Activated CD4-positive, alpha-beta T cell treated with anti-CD3 and anti-CD28 coated beads for 36 hours (primary cell): ENCODE measurements at regions of chr5 and their contacts with region 1.

Region 1: GRCh38 chr5:179858586-179859427 is at the start of gene MRNIP:
- DNase-seq: peak; percentile 95
- ATAC-seq: peak; percentile 98
- H3K4me3 Mint-ChIP-seq: peak within 1 kb of the TSS; percentile 84
- H3K27ac Mint-ChIP-seq: peak within 1 kb of the TSS; percentile 85
- H3K4me1 Mint-ChIP-seq: peaks cover 6% of the 10 kb centered on the region
- H3K27me3 Mint-ChIP-seq: no peaks in the 10 kb centered on the region
- total RNA-seq, gene MRNIP: 19.4 to 19.7 TPM

Region 2: DNA sequence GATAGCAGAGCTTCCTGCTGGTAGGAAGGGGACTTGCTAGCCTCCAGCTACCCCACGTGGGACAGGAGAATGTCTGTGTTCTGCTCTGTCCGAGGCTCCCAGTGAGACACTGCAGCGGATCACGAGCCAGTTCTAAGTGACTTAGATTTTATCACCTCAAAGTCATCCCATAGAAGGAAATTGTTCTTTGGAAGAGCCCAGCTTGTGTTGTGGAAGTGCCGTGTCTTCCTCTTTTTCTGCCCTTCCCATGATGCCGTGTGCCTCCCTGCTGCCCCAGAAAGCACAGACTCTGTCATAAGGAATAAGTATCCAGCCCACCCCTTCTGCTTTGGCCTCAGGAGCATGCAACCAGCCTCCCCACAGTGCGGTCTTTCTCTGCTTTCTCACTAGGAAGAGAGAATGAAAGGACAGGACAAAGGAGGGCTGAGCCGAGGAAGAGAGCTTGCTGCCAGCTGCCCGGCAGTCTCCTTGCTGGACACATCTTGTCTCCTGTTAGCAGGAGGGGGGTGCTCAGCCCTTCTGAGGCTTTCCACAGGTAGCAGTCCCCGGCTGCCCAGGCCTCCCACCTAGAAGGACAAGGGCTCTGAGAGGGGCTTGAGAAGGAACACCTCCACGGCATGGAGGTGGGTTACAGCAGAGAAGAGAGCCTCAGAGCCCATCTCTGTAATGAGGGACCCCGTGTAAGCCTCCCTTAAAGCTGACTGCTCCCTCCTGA is 272.7 kb before region 1 on chr5:
- CTCF ChIA-PET with region 1: no interaction called
- POLR2A ChIA-PET with region 1: no interaction called
- intact Hi-C with region 1: no loop called
- DNase-seq: no peak
- ATAC-seq: no peak
- H3K4me3 Mint-ChIP-seq: no peak overlapping the region
- H3K27ac Mint-ChIP-seq: no peak overlapping the region
- H3K4me1 Mint-ChIP-seq: no peaks in the 10 kb centered on the region
- H3K27me3 Mint-ChIP-seq: no peaks in the 10 kb centered on the region

Region 3: GRCh38 chr5:179720222-179720621 is 138.6 kb before region 1 on chr5:
- CTCF ChIA-PET with region 1: no interaction called
- POLR2A ChIA-PET with region 1: no interaction called
- intact Hi-C with region 1: no loop called
- DNase-seq: no peak
- ATAC-seq: no peak
- H3K4me3 Mint-ChIP-seq: no peak overlapping the region
- H3K27ac Mint-ChIP-seq: no peak overlapping the region
- H3K4me1 Mint-ChIP-seq: peaks cover 4% of the 10 kb centered on the region
- H3K27me3 Mint-ChIP-seq: no peaks in the 10 kb centered on the region

Region 4: GRCh38 chr5:179821581-179822432 is 37.0 kb before region 1 on chr5:
- CTCF ChIA-PET with region 1: no interaction called
- POLR2A ChIA-PET with region 1: no interaction called
- intact Hi-C with region 1: loop called (anchors 1 kb)
- DNase-seq: peak; percentile 92
- ATAC-seq: peak; percentile 71
- H3K4me3 Mint-ChIP-seq: peak overlapping the region; percentile 92
- H3K27ac Mint-ChIP-seq: peak overlapping the region; percentile 90
- H3K4me1 Mint-ChIP-seq: peaks cover 38% of the 10 kb centered on the region
- H3K27me3 Mint-ChIP-seq: peaks cover 2% of the 10 kb centered on the region

Region 5: DNA sequence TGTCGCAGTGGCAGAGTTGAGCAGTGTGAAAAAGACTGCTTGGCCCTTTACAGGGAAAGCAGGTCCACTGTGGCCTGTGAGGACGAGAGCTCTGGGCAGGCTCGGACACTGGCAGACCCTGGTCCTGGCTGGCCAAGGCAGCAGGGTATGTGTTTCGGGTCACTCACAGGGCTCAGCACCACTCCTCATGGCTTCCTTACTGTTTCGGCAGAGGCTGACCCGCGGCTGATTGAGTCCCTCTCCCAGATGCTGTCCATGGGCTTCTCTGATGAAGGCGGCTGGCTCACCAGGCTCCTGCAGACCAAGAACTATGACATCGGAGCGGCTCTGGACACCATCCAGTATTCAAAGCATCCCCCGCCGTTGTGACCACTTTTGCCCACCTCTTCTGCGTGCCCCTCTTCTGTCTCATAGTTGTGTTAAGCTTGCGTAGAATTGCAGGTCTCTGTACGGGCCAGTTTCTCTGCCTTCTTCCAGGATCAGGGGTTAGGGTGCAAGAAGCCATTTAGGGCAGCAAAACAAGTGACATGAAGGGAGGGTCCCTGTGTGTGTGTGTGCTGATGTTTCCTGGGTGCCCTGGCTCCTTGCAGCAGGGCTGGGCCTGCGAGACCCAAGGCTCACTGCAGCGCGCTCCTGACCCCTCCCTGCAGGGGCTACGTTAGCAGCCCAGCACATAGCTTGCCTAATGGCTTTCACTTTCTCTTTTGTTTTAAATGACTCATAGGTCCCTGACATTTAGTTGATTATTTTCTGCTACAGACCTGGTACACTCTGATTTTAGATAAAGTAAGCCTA is 22.4 kb before region 1 on chr5:
- CTCF ChIA-PET with region 1: no interaction called
- POLR2A ChIA-PET with region 1: no interaction called
- intact Hi-C with region 1: loop called in 1 of 2 experiments (anchors 1 kb)
- DNase-seq: peak; percentile 79
- ATAC-seq: peak; percentile 98
- H3K4me3 Mint-ChIP-seq: no peak overlapping the region
- H3K27ac Mint-ChIP-seq: peak overlapping the region; percentile 89
- H3K4me1 Mint-ChIP-seq: peaks cover 19% of the 10 kb centered on the region
- H3K27me3 Mint-ChIP-seq: no peaks in the 10 kb centered on the region

Region 6: DNA sequence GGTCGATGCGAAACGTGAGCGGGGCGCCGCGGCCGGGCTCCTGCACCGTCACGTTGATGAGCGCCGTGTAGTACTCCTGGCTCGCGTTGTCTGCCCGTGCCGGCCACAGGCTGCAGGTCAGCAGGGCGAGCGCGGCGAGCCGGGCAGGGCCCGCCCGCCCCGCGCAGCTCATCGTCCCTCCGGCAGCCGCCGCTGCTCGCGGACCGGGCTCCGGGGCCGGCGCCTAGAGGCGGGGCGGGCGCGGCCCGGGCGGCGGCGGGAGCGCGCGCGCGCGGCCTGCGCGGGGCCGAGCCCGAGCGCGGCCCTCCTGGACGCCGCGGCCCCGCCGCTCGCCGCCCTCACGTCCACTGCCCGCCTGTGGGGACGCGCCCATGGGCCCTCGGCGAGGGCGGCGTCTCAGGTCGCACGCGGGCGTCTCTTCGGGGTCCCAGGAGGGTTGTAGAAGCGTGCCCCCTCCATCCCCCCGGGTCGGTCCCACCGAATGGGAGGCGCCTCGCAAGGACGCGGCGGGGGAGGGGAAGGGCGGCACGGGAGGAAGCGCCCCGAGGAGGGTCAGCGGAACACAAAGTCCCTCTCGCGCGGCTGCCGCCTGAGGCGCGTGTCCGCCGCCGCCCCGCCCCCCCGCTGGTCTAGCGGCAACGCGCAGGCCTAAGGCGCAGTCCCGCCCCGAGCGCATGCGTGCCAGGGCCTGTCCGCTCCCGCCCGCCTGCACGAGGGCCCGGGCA is 212.9 kb after region 1 on chr5 and contains the start of gene RNF130:
- CTCF ChIA-PET with region 1: no interaction called
- POLR2A ChIA-PET with region 1: no interaction called
- intact Hi-C with region 1: loop called in 1 of 2 experiments (anchors 1 kb)
- DNase-seq: peak; percentile 93
- ATAC-seq: peak; percentile 79
- H3K4me3 Mint-ChIP-seq: peak within 1 kb of the TSS; percentile 80
- H3K27ac Mint-ChIP-seq: peak within 1 kb of the TSS; percentile 44
- H3K4me1 Mint-ChIP-seq: peaks cover 29% of the 10 kb centered on the region
- H3K27me3 Mint-ChIP-seq: no peaks in the 10 kb centered on the region
- total RNA-seq, gene RNF130: 10.3 to 13.3 TPM

Region 7: DNA sequence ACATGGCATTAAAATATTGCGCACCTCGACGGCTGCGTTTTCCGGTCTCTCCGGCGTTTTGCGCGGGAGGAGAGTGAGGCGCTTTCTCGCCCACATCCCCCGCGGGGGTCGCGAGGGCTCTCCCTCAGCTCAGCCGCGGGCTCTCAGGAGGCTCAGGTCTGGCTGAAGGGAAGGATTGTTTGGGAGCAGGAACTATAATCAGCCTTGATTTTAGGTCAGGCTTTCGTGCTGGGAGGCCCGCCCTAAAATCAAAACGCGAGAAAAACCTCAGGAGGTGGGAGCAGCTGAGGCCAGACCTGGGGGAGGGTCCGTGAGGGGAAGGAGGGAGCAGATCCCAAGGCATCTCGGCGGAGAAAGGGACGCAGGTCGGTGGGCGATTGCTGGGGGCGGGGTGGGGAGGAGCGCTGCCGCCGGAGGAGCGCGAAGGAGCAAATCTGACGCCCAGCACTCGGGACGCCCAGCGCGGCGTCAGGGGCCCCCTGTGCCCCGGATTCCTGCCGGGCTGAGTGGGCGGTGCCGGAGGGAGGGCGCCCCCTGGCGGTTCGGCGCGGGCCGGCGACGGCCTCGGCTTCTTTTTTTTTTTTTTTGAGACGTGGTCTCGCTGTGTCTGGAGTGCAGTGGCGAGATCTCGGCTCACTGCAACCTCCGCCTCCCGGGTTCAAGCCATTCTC is 231.4 kb after region 1 on chr5:
- CTCF ChIA-PET with region 1: interaction called, 3 read pairs
- POLR2A ChIA-PET with region 1: no interaction called
- intact Hi-C with region 1: loop called in 1 of 2 experiments (anchors 1 kb)
- DNase-seq: peak; percentile 89
- ATAC-seq: peak; percentile 85
- H3K4me3 Mint-ChIP-seq: peak overlapping the region; percentile 74
- H3K27ac Mint-ChIP-seq: peak overlapping the region; percentile 67
- H3K4me1 Mint-ChIP-seq: peaks cover 24% of the 10 kb centered on the region
- H3K27me3 Mint-ChIP-seq: no peaks in the 10 kb centered on the region

Region 8: DNA sequence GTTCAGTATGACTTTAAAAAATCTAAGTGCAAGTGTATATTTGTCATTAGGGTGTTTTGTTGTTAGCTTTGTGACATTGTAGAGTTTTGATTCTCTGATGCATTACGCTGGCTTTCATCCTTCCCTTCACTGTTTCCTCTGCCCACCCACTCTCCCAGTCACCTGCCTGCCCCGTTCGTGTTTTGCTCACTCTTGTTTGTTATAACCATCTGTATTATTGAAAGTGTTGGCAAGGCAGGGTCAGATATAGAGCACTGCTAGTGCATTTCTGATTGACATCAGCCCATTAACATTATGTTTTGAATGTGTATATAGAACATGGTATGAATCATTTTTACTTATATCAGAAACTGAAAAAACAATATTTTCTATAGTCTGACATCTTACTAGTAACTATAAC is 705.2 kb after region 1 on chr5:
- CTCF ChIA-PET with region 1: no interaction called
- POLR2A ChIA-PET with region 1: no interaction called
- intact Hi-C with region 1: no loop called
- DNase-seq: peak; percentile 49
- ATAC-seq: peak; percentile 50
- H3K4me3 Mint-ChIP-seq: no peak overlapping the region
- H3K27ac Mint-ChIP-seq: no peak overlapping the region
- H3K4me1 Mint-ChIP-seq: peaks cover 35% of the 10 kb centered on the region
- H3K27me3 Mint-ChIP-seq: no peaks in the 10 kb centered on the region